Posterior cingulate gyrus (tissue), 11 donors: ENCODE measurements at regions of chr2 and their contacts with region 1.

Region 1: GRCh38 chr2:112749755-112750559 is 14.5 kb downstream of the CKAP2L start:
- DNase-seq: peak; percentile 63 to 97 (median 82)

Region 2: DNA sequence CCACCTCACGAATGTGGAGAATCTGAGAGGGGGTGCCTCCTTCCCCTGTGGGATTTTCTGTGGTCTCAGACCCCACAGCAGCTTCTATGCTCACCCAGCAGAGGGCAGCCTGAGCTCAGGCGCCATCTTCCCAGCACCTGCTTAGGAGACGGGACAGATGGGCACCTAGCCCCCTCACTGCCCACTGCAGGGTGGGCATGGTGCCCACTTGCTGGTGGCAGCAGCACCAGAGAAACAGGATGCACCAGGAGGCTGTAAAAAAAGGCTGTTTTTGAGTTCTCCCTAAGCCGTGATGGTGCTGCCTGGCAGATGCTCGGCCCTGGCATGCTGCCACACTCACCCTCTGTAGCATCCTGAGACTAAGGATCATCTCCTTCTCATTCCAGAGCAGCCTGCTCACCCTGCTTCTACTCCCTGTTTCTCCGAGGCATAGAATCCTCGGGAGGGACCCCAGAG is 123.3 kb before region 1 on chr2:
- intact Hi-C with region 1: no loop called
- DNase-seq: peak; percentile 64 to 95 (median 79)

Region 3: GRCh38 chr2:112884869-112885505 is 135.0 kb after region 1 on chr2:
- intact Hi-C with region 1: loop called (anchors 5 kb)
- DNase-seq: peak in 4 of 10 donors; percentile 36 to 73 (median 56)

Region 4: DNA sequence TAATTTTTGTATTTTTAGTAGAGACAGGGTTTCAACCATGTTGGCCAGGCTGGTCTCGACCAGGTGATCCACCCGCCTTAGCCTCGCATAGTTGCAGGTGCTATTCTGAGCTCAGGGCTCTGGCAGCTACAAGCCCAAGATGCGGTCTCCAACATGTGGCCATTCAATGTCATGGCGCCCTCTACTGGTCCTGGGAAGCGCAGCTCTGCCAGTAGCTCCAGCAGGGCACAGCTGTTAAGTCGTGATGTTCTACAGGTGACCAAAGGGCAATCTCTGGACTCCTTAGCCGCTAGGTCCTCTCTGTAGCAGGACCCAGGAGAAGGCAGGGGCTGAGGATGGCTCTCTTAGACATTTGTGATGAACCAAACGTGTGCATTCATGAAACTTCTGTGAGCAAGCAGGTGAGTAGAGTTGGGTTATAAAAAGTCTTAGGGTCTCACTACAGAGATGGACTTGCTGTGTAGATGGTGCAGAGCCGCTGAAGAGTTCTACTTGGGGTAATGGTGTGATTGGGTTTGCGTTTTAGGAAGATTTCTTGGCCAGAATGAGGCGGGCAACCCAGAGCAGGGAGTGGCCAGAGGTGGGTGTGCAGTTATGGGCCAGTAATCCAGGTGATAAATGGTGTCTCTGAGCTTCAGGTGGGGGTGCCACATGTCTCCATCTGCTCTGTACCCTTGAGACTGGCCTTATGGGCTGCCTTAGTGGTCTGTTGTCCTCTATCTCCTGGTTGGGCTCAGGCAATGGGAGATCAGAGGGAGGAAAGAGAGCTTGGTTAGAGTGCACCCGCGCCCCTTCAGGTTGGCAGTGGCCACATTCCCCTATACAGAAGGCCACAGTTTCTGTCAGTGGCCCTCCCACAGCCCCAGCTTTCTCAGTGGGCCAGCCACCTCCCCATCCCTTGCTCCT is 192.0 kb after region 1 on chr2:
- intact Hi-C with region 1: loop called (anchors 1 kb)
- DNase-seq: peak; percentile 57 to 97 (median 80)

Region 5: GRCh38 chr2:112958428-112959108 is 208.6 kb after region 1 on chr2:
- intact Hi-C with region 1: loop called (anchors 5 kb)
- DNase-seq: peak in 2 of 10 donors; percentile 11 to 16